ENCODE measurements at regions of chr9 and their contacts with region 1.

Region 1: DNA sequence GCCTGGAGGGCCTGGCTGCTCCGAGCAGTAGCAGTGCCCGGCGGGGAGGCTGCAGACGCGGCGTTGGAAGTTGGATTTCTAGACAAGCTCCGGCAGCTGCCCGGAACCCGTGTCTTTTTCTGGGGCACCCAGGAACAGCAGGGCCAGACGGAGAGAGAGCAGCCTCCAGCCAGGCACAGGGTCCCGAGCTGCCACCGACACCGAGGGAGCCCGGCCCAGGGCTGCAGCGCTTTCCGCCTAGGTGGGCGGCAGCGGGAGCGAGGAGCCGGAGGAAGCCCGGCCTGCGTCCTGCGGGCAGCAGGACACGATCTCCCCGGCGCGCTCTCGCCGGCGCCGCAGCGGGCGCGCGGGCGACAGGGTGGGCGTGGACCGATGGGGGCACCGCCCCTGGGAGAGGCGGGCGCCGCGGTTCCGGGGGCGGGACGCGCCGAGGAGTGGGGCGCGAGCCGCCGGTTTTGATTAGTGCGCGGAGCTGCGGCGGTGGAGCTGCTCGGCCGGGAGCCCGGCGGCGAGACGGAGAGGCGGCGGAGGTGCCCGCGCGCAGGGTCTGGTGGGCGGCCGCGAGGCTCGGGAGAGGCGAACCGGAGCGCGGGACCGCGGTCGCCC is at the start of gene UGCG:
- DNase-seq: peak; percentile 92
- ATAC-seq: peak; percentile 87
- H3K4me3 Mint-ChIP-seq: peak within 1 kb of the TSS; percentile 96
- H3K27ac Mint-ChIP-seq: peak within 1 kb of the TSS; percentile 93
- H3K4me1 Mint-ChIP-seq: peaks cover 16% of the 10 kb centered on the region
- H3K27me3 Mint-ChIP-seq: no peaks in the 10 kb centered on the region
- CTCF ChIP-seq: no peak
- total RNA-seq, gene UGCG: 103 and 111 TPM in 2 replicates

Region 2: GRCh38 chr9:111356481-111357244 is 539.8 kb before region 1 on chr9:
- CTCF ChIA-PET with region 1: no interaction called
- POLR2A ChIA-PET with region 1: no interaction called
- intact Hi-C with region 1: no loop called
- DNase-seq: no peak
- ATAC-seq: no peak
- H3K4me3 Mint-ChIP-seq: no peak overlapping the region
- H3K27ac Mint-ChIP-seq: no peak overlapping the region
- H3K4me1 Mint-ChIP-seq: no peaks in the 10 kb centered on the region
- H3K27me3 Mint-ChIP-seq: peaks cover 6% of the 10 kb centered on the region
- CTCF ChIP-seq: no peak

Region 3: DNA sequence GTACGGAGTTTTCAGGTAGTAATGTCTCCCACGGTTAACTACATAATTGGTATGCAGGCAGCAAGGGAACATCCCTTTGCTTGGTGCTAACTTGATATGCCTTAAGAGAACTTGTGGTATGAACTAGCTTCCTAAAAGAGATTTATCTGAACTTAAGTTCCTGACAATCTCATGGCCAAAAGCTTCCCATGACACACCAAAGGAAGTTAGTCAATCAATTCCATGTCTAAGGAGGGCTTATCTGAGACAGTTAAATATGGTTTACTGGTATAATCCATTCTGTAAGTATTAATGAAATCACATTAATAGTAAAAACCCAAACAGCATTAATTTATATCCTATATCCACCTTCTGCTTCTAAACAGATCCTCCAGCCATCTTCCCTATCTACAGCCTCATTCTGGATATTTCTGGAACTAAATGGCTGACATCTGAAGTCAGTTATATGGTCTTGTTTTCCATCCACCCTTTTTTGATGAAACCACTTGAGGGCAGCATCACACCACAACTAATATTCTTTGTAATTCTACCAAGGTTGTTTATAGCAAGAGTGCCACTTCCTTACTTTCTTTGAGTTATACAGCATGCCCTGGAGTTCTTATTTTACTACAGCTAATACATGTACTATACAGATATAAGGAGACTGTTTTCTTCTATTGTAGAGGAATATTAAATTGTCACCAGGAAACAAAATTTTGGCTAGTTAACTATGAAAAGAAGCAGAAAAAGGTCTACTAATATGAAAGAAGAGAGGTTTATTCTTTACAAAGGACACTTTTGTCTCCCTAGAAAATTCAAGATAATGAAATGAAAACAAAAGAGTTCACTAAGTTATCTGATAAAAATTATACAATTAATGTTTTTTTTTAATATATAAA is 136.5 kb before region 1 on chr9:
- CTCF ChIA-PET with region 1: no interaction called
- POLR2A ChIA-PET with region 1: no interaction called
- intact Hi-C with region 1: loop called (anchors 1 kb)
- DNase-seq: no peak
- ATAC-seq: peak; percentile 84
- H3K4me3 Mint-ChIP-seq: no peak overlapping the region
- H3K27ac Mint-ChIP-seq: no peak overlapping the region
- H3K4me1 Mint-ChIP-seq: peaks cover 4% of the 10 kb centered on the region
- H3K27me3 Mint-ChIP-seq: no peaks in the 10 kb centered on the region
- CTCF ChIP-seq: peak; percentile 55

Region 4: GRCh38 chr9:111916234-111916645 is 19.8 kb after region 1 on chr9:
- CTCF ChIA-PET with region 1: interaction called, 3 read pairs
- POLR2A ChIA-PET with region 1: interaction called, 25 read pairs
- intact Hi-C with region 1: loop called (anchors 1 kb)
- DNase-seq: no peak
- ATAC-seq: peak; percentile 41
- H3K4me3 Mint-ChIP-seq: peak overlapping the region; percentile 9
- H3K27ac Mint-ChIP-seq: peak overlapping the region; percentile 81
- H3K4me1 Mint-ChIP-seq: peaks cover 82% of the 10 kb centered on the region
- H3K27me3 Mint-ChIP-seq: no peaks in the 10 kb centered on the region
- CTCF ChIP-seq: no peak

Region 5: DNA sequence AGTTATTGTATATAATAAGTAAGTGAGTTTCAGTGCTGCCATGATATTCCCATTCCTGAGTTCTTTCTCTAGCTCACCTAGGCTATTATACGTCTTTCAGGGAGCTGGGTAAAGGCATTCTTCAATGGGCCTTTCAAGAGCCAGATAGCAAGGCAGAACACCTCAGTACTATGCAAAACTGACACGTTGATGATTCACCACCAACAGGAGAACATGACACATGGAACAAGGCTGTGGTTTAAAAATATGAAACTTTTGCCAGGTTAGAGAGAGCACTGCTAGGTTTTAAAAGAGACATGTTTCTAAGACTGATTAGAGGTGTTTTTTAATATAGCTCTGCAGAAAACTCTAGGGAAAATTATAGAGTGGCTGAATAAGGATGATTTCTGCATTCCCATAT is 96.1 kb after region 1 on chr9:
- CTCF ChIA-PET with region 1: no interaction called
- POLR2A ChIA-PET with region 1: interaction called, 14 read pairs
- intact Hi-C with region 1: no loop called
- DNase-seq: no peak
- ATAC-seq: peak; percentile 92
- H3K4me3 Mint-ChIP-seq: no peak overlapping the region
- H3K27ac Mint-ChIP-seq: peak overlapping the region; percentile 79
- H3K4me1 Mint-ChIP-seq: peaks cover 47% of the 10 kb centered on the region
- H3K27me3 Mint-ChIP-seq: no peaks in the 10 kb centered on the region
- CTCF ChIP-seq: no peak

Region 6: GRCh38 chr9:112037281-112038016 is 141.0 kb after region 1 on chr9:
- CTCF ChIA-PET with region 1: no interaction called
- POLR2A ChIA-PET with region 1: interaction called, 122 read pairs
- intact Hi-C with region 1: loop called (anchors 1 kb)
- DNase-seq: no peak
- ATAC-seq: peak; percentile 65
- H3K4me3 Mint-ChIP-seq: peak overlapping the region; percentile 68
- H3K27ac Mint-ChIP-seq: peak overlapping the region; percentile 96
- H3K4me1 Mint-ChIP-seq: peaks cover 88% of the 10 kb centered on the region
- H3K27me3 Mint-ChIP-seq: no peaks in the 10 kb centered on the region
- CTCF ChIP-seq: no peak

Region 7: GRCh38 chr9:112333639-112334431 is 437.4 kb after region 1 on chr9:
- CTCF ChIA-PET with region 1: no interaction called
- POLR2A ChIA-PET with region 1: interaction called, 9 read pairs
- intact Hi-C with region 1: loop called (anchors 1 kb)
- DNase-seq: peak; percentile 85
- ATAC-seq: peak; percentile 87
- H3K4me3 Mint-ChIP-seq: peak overlapping the region; percentile 94
- H3K27ac Mint-ChIP-seq: peak overlapping the region; percentile 96
- H3K4me1 Mint-ChIP-seq: peaks cover 40% of the 10 kb centered on the region
- H3K27me3 Mint-ChIP-seq: no peaks in the 10 kb centered on the region
- CTCF ChIP-seq: no peak

Region 8: GRCh38 chr9:112809351-112809848 is 912.9 kb after region 1 on chr9:
- CTCF ChIA-PET with region 1: no interaction called
- POLR2A ChIA-PET with region 1: no interaction called
- intact Hi-C with region 1: loop called (anchors 1 kb)
- DNase-seq: no peak
- ATAC-seq: peak; percentile 93
- H3K4me3 Mint-ChIP-seq: no peak overlapping the region
- H3K27ac Mint-ChIP-seq: no peak overlapping the region
- H3K4me1 Mint-ChIP-seq: peaks cover 23% of the 10 kb centered on the region
- H3K27me3 Mint-ChIP-seq: peaks cover 10% of the 10 kb centered on the region
- CTCF ChIP-seq: no peak

Measured in activated B cell treated with CpG ODN at 0.5 μM for 24 hours (primary cell).